ENCODE measurements at regions of chr1 and their contacts with region 1.

Region 1: DNA sequence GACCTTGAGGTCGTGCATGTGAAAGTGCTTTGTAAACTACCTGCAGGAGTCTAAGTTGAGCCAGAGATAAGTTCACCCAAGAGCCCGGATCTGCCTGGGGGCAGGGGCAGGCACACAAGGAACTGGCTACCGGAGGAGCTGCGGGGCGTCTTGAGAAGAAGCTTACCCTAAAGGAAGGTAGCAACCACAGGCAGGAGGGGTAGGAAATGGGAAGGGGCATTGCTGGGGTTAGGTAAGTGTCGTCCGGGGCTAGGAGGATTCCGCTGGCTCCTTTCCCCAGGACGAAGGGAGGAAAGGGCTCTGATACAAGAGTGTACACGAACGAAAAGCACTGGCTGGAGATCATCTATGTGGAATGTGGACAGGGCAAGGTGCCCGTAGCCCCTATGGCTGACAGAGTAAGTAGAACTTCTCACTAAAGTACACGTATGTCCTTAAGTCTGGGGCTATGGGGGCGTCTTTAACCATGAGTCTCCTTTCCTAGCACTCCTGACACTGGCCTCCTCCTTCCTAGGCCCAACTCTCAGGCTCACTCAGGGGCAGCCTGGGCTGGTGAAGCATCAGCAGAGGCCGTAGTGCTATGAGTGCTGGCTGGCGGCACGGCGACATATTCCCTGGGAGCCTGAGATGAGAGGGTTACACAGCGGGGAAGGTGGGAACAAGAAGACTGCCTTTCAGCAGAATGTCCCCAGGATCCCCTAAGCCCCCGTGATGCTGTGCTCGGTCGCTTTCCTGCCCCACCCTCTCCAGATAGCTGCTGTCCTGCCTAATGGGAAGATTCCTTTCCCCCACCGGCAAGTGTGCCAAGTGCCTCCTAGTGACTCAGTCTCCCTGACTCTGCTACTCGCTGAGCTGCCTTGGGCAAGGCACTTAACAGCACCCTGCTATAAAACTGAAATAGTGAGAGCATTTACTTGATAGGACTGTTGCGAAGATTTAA is 9.1 kb upstream of the GALNT2 start:
- DNase-seq: no peak
- ATAC-seq: no peak
- H3K4me3 ChIP-seq: no peak overlapping the region
- H3K27ac ChIP-seq: no peak overlapping the region
- H3K4me1 ChIP-seq: no peaks in the 10 kb centered on the region
- H3K27me3 ChIP-seq: no peaks in the 10 kb centered on the region

Region 2: DNA sequence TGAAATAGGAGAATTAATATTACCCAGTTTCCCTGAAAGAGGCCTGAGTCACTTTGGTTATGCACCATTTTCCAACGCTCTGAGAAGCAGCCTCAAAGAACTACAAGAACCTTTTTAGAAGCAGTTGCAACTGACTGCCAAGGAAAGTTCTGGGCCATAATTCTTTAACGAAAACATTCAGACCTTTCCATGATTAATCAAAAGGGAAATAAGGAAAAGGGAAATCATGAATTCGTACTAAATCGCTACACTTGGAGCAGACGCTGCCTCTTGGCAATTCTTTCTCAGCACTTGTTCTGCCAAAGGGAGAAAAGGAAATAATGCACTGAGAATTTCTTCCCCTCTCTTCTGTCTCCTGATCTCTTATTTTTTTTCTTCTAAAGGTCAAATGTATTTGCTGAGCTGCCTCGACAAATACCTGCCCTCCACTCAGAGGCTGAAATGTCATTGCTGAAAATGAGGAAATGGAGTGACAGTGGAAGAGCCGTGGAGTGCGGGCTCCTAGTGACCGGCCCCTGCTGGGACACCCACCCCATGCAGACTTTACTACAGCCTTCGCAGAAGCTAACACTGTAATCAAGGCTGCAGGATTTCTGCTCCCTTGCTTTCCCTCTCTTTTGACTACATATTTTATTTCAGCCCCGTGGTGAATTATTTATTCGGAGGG is 58.8 kb before region 1 on chr1:
- intact Hi-C with region 1: loop called in 1 of 2 experiments (anchors 5 kb)
- DNase-seq: no peak
- ATAC-seq: peak; percentile 47
- H3K4me3 ChIP-seq: no peak overlapping the region
- H3K27ac ChIP-seq: peak overlapping the region; percentile 78 to 86
- H3K4me1 ChIP-seq: peaks cover 0 to 8% of the 10 kb centered on the region in 2 donors
- H3K27me3 ChIP-seq: no peaks in the 10 kb centered on the region

Region 3: DNA sequence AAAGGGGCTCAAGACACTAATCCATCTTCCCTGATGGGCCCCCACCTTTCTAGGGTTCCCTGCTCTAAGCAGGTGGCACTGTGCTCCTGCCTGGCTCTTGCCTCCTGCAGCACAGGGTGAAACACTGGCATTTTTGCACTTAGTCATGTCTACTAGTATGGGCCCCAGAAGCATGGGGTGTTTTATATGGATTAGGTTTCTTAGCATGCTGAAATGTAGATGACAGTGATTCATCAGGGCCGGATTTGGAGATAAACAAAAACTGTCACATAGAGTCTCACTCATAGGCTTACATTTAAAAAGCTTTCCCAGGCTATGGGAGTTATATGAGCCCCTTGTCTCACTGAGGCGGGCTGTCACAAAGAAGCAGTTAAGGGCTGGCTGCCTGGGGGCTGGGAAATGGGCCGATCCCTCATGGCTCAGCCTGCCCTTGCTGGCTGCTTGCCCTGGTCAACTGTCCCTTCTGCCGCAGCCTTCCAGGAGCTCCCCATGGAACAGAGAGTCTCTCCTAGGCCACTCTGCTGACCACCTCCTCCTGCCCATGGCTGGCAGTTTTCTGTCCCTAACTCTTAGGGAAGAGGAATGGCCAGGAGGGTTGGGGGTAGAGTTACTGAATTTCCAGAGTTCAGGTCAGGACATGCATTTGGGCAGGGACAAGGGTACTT is 15.6 kb after region 1 on chr1:
- intact Hi-C with region 1: no loop called
- DNase-seq: no peak
- ATAC-seq: peak; percentile 9
- H3K4me3 ChIP-seq: no peak overlapping the region
- H3K27ac ChIP-seq: peak overlapping the region in 1 of 2 donors; percentile 42
- H3K4me1 ChIP-seq: peaks cover 10 to 27% of the 10 kb centered on the region in 2 donors
- H3K27me3 ChIP-seq: no peaks in the 10 kb centered on the region

Region 4: GRCh38 chr1:230104395-230105244 is 46.7 kb after region 1 on chr1:
- intact Hi-C with region 1: no loop called
- DNase-seq: peak; percentile 98 to 100
- ATAC-seq: peak; percentile 91
- H3K4me3 ChIP-seq: no peak overlapping the region
- H3K27ac ChIP-seq: peak overlapping the region; percentile 18 to 99
- H3K4me1 ChIP-seq: peaks cover 8 to 15% of the 10 kb centered on the region in 2 donors
- H3K27me3 ChIP-seq: no peaks in the 10 kb centered on the region

Measured in aorta (tissue), 5 donors.